ENCODE measurements at regions of chr2 and their contacts with region 1.

Region 1: GRCh38 chr2:180385601-180386201 is 378.6 kb upstream of the CWC22 start:
- DNase-seq: no peak
- ATAC-seq: peak; percentile 64
- H3K4me3 ChIP-seq: no peak overlapping the region
- H3K27ac ChIP-seq: no peak overlapping the region
- H3K4me1 ChIP-seq: no peaks in the 10 kb centered on the region
- H3K27me3 ChIP-seq: no peaks in the 10 kb centered on the region
- CTCF ChIP-seq: no peak
- EP300 ChIP-seq: no peak
- POLR2A ChIP-seq: no peak
- RAD21 ChIP-seq: no peak

Region 2: DNA sequence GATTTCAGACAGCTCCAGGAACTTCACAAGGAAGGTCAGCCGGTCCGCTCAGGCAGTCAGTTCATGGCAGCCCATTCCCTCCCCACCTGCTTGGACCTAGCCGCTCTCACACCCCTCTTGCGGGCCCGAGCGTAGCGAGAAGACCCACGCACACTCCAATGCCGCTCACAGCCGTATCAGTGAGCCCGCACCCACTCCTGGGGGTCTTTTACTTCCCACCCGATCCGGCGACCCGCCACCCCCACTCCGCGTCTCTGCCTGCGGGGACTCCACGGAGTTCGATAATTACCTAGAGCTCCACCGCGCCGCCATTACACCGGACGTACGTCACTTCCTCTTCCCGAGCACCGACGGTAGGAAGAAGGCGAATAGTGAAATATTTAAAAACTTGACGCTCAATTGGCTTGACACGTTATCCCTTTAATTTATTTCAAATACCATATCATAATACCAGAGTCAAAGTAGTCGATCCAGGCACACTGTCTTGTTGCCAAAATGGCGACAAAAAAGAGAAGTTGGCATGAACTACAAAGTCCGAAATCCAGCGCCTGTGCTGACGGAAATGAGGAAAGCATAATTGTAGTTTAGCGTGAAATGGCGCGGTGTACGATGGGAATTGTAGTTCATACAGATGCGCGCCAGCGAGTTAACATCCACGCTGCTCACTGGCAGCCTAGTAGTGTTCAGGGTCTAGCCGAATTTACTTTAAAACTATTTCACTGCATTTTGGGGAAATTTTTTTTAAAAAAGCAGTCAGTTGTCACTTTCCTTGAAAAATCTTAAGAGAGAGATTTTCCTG is 378.7 kb before region 1 on chr2 and contains the start of gene CWC22:
- CTCF ChIA-PET with region 1: no interaction called
- POLR2A ChIA-PET with region 1: no interaction called
- RAD21 ChIA-PET with region 1: no interaction called
- SMC1A ChIA-PET with region 1: no interaction called
- in situ Hi-C with region 1: no loop called
- intact Hi-C with region 1: no loop called
- DNase-seq: peak; percentile 91
- ATAC-seq: peak; percentile 93
- H3K4me3 ChIP-seq: peak within 1 kb of the TSS; percentile 89
- H3K27ac ChIP-seq: peak within 1 kb of the TSS; percentile 98
- H3K4me1 ChIP-seq: peaks cover 5% of the 10 kb centered on the region
- H3K27me3 ChIP-seq: no peaks in the 10 kb centered on the region
- CTCF ChIP-seq: no peak
- EP300 ChIP-seq: no peak
- POLR2A ChIP-seq: peak; percentile 88
- RAD21 ChIP-seq: no peak
- polyA plus RNA-seq, gene CWC22: 26.4 to 29.5 TPM

Region 3: DNA sequence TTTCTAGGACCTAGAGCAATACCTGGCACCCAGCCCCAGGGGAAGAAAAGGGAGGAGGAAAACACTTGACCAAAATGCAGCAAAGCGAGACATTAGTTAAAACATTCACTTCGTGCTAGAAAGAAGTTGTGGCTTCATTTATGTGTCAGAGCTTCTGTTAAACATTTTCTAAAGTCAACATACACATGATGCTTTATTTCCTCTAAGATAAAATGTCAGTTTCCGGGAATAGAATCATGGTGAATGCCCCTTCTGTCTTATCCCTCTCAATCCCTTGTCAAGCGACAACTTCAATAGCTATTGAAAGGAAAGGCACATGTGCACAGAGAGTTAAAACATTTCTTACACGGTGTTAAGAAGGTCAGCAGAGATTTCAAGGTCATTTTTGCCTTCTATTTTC is 26.0 kb after region 1 on chr2:
- CTCF ChIA-PET with region 1: no interaction called
- POLR2A ChIA-PET with region 1: no interaction called
- RAD21 ChIA-PET with region 1: interaction called, 3 read pairs
- SMC1A ChIA-PET with region 1: interaction called, 11 read pairs
- in situ Hi-C with region 1: no loop called
- intact Hi-C with region 1: no loop called
- DNase-seq: no peak
- ATAC-seq: peak; percentile 82
- H3K4me3 ChIP-seq: no peak overlapping the region
- H3K27ac ChIP-seq: no peak overlapping the region
- H3K4me1 ChIP-seq: no peaks in the 10 kb centered on the region
- H3K27me3 ChIP-seq: no peaks in the 10 kb centered on the region
- CTCF ChIP-seq: no peak
- EP300 ChIP-seq: no peak
- POLR2A ChIP-seq: no peak
- RAD21 ChIP-seq: no peak

Measured in GM12878 (cell line).